Activated naive CD4-positive, alpha-beta T cell treated with anti-CD3 and anti-CD28 coated beads, Interleukin-2, amount 10 ng/mL, durations not matched to agents 7 days and 5 days (primary cell): ENCODE measurements at regions of chr2 and their contacts with region 1.

Region 1: GRCh38 chr2:161273038-161273760 is 35.0 kb upstream of the PSMD14 start:
- DNase-seq: no peak
- H3K4me3 Mint-ChIP-seq: no peak overlapping the region
- H3K27ac Mint-ChIP-seq: no peak overlapping the region
- H3K4me1 Mint-ChIP-seq: no peaks in the 10 kb centered on the region
- H3K27me3 Mint-ChIP-seq: peaks cover 14% of the 10 kb centered on the region

Region 2: GRCh38 chr2:161250864-161251436 is 22.2 kb before region 1 on chr2:
- CTCF ChIA-PET with region 1: interaction called, 16 read pairs
- DNase-seq: no peak
- H3K4me3 Mint-ChIP-seq: no peak overlapping the region
- H3K27ac Mint-ChIP-seq: no peak overlapping the region
- H3K4me1 Mint-ChIP-seq: peaks cover 16% of the 10 kb centered on the region
- H3K27me3 Mint-ChIP-seq: no peaks in the 10 kb centered on the region